ENCODE measurements at regions of chr6 and their contacts with region 1.

Region 1: GRCh38 chr6:119742188-119742803 is 392.7 kb upstream of the MAN1A1 start:
- DNase-seq: peak; percentile 54
- ATAC-seq: peak; percentile 99
- H3K4me3 ChIP-seq: no peak overlapping the region
- H3K27ac ChIP-seq: no peak overlapping the region
- H3K4me1 ChIP-seq: no peaks in the 10 kb centered on the region
- H3K27me3 ChIP-seq: no peaks in the 10 kb centered on the region
- CTCF ChIP-seq: peak; percentile 92
- EP300 ChIP-seq: no peak
- POLR2A ChIP-seq: no peak
- RAD21 ChIP-seq: peak; percentile 83

Region 2: GRCh38 chr6:119147101-119148053 is 594.9 kb before region 1 on chr6:
- CTCF ChIA-PET with region 1: no interaction called
- POLR2A ChIA-PET with region 1: no interaction called
- in situ Hi-C with region 1: loop called (anchors 25 kb)
- intact Hi-C with region 1: loop called (anchors 1 kb)
- DNase-seq: peak; percentile 92
- ATAC-seq: peak; percentile 82
- H3K4me3 ChIP-seq: no peak overlapping the region
- H3K27ac ChIP-seq: peak overlapping the region; percentile 46
- H3K4me1 ChIP-seq: peaks cover 59% of the 10 kb centered on the region
- H3K27me3 ChIP-seq: no peaks in the 10 kb centered on the region
- CTCF ChIP-seq: no peak
- EP300 ChIP-seq: peak in 1 of 2 experiments; percentile 85; a peak in 2 of 4 replicates
- POLR2A ChIP-seq: no peak
- RAD21 ChIP-seq: no peak

Region 3: DNA sequence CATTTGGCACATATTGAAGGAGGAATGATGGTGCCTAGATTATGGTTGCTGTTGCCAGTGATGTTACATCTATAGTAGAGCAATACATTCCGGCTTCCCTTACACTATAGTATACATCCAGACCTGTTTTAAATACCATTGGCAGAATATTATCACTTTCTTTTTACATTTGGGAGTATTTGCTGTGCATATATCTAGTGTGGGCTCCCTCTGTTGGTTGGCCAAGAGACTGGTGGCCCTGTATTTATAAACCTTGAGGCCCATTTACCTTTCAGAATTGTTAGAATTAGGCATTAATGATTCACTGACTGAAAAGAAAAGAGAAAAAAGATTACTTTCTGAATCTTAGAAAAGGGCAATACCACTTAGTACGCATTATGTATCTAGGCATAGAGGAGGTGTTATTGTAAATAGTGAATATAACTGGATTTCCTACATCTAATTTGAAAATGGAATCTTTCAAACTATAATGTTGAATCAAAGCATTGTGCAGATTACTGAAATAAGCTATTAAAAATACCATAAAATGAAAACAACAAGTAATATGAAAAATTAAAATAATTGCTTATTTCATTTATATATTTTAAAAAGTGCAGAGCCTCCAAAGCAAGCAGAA is 236.1 kb after region 1 on chr6:
- CTCF ChIA-PET with region 1: no interaction called
- POLR2A ChIA-PET with region 1: no interaction called
- in situ Hi-C with region 1: loop called (anchors 10 kb)
- intact Hi-C with region 1: loop called (anchors 1 kb)
- DNase-seq: peak; percentile 15
- ATAC-seq: peak; percentile 83
- H3K4me3 ChIP-seq: no peak overlapping the region
- H3K27ac ChIP-seq: no peak overlapping the region
- H3K4me1 ChIP-seq: no peaks in the 10 kb centered on the region
- H3K27me3 ChIP-seq: no peaks in the 10 kb centered on the region
- CTCF ChIP-seq: peak; percentile 48
- EP300 ChIP-seq: no peak
- POLR2A ChIP-seq: no peak
- RAD21 ChIP-seq: no peak

Region 4: DNA sequence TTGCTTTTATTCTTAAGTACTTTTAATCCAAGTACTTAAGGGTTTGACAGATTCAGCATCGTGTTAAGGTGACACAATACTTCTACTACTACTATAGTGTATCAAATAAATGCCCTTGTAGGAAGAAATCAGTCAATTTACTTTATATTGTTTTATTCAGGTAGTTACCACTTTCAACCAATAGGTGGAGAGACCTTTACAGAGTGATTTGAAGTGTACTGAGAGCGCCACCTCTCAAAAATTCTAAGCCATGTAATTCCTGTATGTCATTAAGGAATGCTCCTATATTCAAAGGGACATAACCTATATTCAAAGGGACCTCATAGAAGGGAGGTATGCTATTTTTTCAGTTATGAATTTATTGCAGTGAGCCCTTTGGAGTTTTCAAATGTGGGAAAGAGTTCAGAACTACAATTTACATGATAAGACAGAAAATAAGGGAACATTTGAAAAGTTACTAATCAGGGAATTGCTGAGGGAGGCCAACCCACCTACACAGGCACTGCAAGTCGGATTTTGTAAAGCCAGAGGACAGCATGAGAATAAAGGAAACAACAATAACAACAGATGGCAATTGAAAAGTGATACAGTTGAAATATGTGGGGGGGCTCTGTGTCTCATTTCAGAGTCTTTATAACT is 636.4 kb after region 1 on chr6:
- CTCF ChIA-PET with region 1: interaction called, 3 read pairs
- POLR2A ChIA-PET with region 1: no interaction called
- in situ Hi-C with region 1: no loop called
- intact Hi-C with region 1: loop called (anchors 1 kb)
- DNase-seq: peak; percentile 72
- ATAC-seq: peak; percentile 97
- H3K4me3 ChIP-seq: no peak overlapping the region
- H3K27ac ChIP-seq: no peak overlapping the region
- H3K4me1 ChIP-seq: no peaks in the 10 kb centered on the region
- H3K27me3 ChIP-seq: no peaks in the 10 kb centered on the region
- CTCF ChIP-seq: peak; percentile 65
- EP300 ChIP-seq: no peak
- POLR2A ChIP-seq: no peak
- RAD21 ChIP-seq: peak; percentile 40; the same call in 1 of the 2 replicates

Region 5: GRCh38 chr6:120392941-120393340 is 650.6 kb after region 1 on chr6:
- CTCF ChIA-PET with region 1: no interaction called
- POLR2A ChIA-PET with region 1: no interaction called
- in situ Hi-C with region 1: no loop called
- intact Hi-C with region 1: no loop called
- DNase-seq: no peak
- ATAC-seq: no peak
- H3K4me3 ChIP-seq: no peak overlapping the region
- H3K27ac ChIP-seq: no peak overlapping the region
- H3K4me1 ChIP-seq: no peaks in the 10 kb centered on the region
- H3K27me3 ChIP-seq: no peaks in the 10 kb centered on the region; a peak in 1 of 5 replicates
- CTCF ChIP-seq: no peak
- EP300 ChIP-seq: no peak
- POLR2A ChIP-seq: no peak
- RAD21 ChIP-seq: no peak

Region 6: DNA sequence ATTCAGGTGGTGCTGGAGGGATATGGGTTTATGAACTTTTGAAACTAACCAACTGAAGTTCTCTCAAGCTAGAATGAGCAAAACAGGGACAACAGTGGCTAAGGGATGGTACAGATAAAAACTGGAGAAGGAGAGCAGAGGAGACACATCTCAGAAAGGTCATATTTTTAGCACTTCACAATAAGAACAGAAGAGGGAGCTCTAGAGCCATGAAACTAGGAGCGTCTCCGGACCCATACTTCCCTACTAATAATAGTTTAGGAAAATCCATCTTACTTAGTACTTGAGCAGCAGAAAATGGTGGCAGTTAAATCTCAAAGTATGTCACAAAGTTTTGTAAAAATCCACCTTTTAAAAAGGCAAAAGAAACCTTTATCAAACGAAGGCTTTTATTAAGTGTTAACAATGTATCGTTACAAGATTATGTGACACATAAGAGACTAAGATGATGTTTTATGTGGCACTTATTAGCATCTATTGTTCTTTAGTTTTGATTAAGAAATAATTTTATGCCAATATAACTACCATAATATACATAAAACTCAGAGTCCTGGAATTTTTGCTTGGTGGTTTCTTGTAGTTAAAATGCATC is 1313.4 kb after region 1 on chr6:
- CTCF ChIA-PET with region 1: no interaction called
- POLR2A ChIA-PET with region 1: no interaction called
- in situ Hi-C with region 1: no loop called
- intact Hi-C with region 1: loop called (anchors 2 kb)
- DNase-seq: peak; percentile 54
- ATAC-seq: peak; percentile 97
- H3K4me3 ChIP-seq: no peak overlapping the region
- H3K27ac ChIP-seq: no peak overlapping the region
- H3K4me1 ChIP-seq: no peaks in the 10 kb centered on the region
- H3K27me3 ChIP-seq: no peaks in the 10 kb centered on the region
- CTCF ChIP-seq: peak; percentile 81
- EP300 ChIP-seq: no peak
- POLR2A ChIP-seq: no peak
- RAD21 ChIP-seq: peak; percentile 65